CD14-positive monocyte (primary cell): ENCODE measurements at regions of chr18 and their contacts with region 1.

Region 1: GRCh38 chr18:47930931-47931717 is 665 bp upstream of the SMAD2 start:
- DNase-seq: peak; percentile 93 to 94 (median 93)
- H3K4me3 ChIP-seq: peak overlapping the region; percentile 28 to 87 (median 46)
- H3K4me3 Mint-ChIP-seq: peak overlapping the region; percentile 78 to 86
- H3K27ac ChIP-seq: peak overlapping the region; percentile 87 to 94
- H3K27ac Mint-ChIP-seq: peak overlapping the region; percentile 88 to 94 (median 91)
- H3K4me1 ChIP-seq: peaks cover 35 to 41% of the 10 kb centered on the region in 2 donors
- H3K4me1 Mint-ChIP-seq: peaks cover 50% of the 10 kb centered on the region
- H3K27me3 ChIP-seq: no peaks in the 10 kb centered on the region
- H3K27me3 Mint-ChIP-seq: peaks cover 0 to 2% (median 0%) of the 10 kb centered on the region in 3 donors
- CTCF ChIP-seq: no peak

Region 2: DNA sequence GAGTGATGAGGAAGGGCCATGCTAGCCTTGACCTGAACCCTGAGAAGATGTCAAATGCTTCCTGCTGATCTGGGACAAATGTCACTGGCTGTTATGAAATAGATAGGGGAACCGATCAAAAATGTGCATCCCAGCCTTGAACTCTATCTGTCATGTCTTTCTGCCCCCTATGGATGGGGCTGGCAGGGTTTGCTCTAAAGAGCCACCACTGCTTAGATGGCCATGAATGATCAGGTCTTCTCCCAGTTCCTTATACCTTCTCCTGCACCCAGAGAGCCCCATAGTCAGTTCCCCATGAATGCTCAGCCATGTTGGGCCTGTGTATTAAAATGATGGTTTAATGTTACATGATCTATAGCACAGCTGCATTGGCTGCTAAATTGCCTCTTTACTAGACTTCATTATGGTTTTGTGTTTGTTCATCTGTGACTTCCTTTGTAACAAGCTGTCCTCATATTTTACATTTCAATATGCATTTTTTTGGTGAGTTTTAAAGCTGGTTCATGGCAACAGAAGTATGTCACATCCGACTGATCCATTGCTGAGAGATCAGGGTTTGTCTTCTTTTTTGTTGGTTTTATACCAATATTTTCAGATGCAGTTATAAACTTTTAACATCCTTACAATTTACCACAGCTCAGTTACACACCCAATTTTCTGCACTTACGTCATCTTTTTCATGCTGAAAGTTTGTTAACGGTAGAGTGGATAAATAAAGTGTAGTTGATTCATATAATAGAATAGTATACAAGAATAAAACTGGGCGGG is 55.7 kb after region 1 on chr18:
- intact Hi-C with region 1: loop called in 1 of 2 experiments (anchors 5 kb)
- DNase-seq: peak; percentile 22 to 30 (median 29)
- H3K4me3 ChIP-seq: peak overlapping the region in 1 of 3 experiments; percentile 2
- H3K4me3 Mint-ChIP-seq: peak overlapping the region in 1 of 2 donors; percentile 60
- H3K27ac ChIP-seq: peak overlapping the region; percentile 23 to 85
- H3K27ac Mint-ChIP-seq: peak overlapping the region; percentile 89 to 95 (median 93)
- H3K4me1 ChIP-seq: peaks cover 54 to 55% of the 10 kb centered on the region in 2 donors
- H3K4me1 Mint-ChIP-seq: peaks cover 51% of the 10 kb centered on the region
- H3K27me3 ChIP-seq: no peaks in the 10 kb centered on the region
- H3K27me3 Mint-ChIP-seq: peaks cover 4 to 19% (median 4%) of the 10 kb centered on the region in 3 donors
- CTCF ChIP-seq: no peak

Region 3: GRCh38 chr18:48007955-48008701 is 77.0 kb after region 1 on chr18:
- intact Hi-C with region 1: loop called (anchors 5 kb)
- DNase-seq: peak; percentile 30 to 50 (median 42)
- H3K4me3 ChIP-seq: peak overlapping the region; percentile 26 to 79 (median 50)
- H3K4me3 Mint-ChIP-seq: peak overlapping the region; percentile 72 to 80
- H3K27ac ChIP-seq: no peak overlapping the region
- H3K27ac Mint-ChIP-seq: peak overlapping the region in 2 of 7 donors; percentile 46 to 63
- H3K4me1 ChIP-seq: peaks cover 12 to 28% of the 10 kb centered on the region in 2 donors
- H3K4me1 Mint-ChIP-seq: peaks cover 24% of the 10 kb centered on the region
- H3K27me3 ChIP-seq: peaks cover 0 to 8% of the 10 kb centered on the region in 2 donors
- H3K27me3 Mint-ChIP-seq: peaks cover 22 to 33% (median 29%) of the 10 kb centered on the region in 3 donors
- CTCF ChIP-seq: peak; percentile 97